Panc1 (cell line): ENCODE measurements at regions of chr19 and their contacts with region 1.

Region 1: GRCh38 chr19:40200341-40201099 is 9.3 kb downstream of the MAP3K10 start:
- DNase-seq: no peak
- ATAC-seq: peak; percentile 7; the same call in 1 of the 2 replicates
- H3K4me3 ChIP-seq: no peak overlapping the region
- H3K27ac ChIP-seq: no peak overlapping the region
- H3K4me1 ChIP-seq: no peaks in the 10 kb centered on the region
- H3K27me3 ChIP-seq: no peaks in the 10 kb centered on the region
- CTCF ChIP-seq: no peak

Region 2: DNA sequence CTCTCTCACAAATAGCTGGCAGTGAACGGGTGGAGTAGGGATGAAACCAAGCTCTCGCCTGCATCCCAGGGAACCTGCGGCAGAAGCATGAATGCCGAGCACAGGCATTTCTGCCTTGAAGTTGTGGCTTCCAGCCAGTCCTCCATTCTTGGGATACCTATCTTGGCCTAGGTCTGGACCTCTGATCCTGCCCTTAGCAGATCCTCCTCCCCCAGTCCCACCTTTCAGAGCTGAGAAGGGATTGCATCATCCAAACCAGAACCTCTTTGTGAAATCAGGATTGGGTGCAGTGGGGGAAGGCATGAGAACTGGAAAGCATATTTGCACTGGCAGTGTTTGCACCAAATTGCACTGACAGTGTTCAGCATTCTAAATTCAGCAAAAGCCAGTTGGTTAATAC is 115.6 kb before region 1 on chr19:
- CTCF ChIA-PET with region 1: no interaction called
- POLR2A ChIA-PET with region 1: no interaction called
- in situ Hi-C with region 1: no loop called
- intact Hi-C with region 1: no loop called
- DNase-seq: no peak
- ATAC-seq: peak; percentile 47
- H3K4me3 ChIP-seq: peak overlapping the region in 1 of 2 experiments; percentile 0; a peak in 2 of 4 replicates
- H3K27ac ChIP-seq: peak overlapping the region; percentile 40
- H3K4me1 ChIP-seq: peaks cover 20% of the 10 kb centered on the region
- H3K27me3 ChIP-seq: no peaks in the 10 kb centered on the region
- CTCF ChIP-seq: no peak

Region 3: DNA sequence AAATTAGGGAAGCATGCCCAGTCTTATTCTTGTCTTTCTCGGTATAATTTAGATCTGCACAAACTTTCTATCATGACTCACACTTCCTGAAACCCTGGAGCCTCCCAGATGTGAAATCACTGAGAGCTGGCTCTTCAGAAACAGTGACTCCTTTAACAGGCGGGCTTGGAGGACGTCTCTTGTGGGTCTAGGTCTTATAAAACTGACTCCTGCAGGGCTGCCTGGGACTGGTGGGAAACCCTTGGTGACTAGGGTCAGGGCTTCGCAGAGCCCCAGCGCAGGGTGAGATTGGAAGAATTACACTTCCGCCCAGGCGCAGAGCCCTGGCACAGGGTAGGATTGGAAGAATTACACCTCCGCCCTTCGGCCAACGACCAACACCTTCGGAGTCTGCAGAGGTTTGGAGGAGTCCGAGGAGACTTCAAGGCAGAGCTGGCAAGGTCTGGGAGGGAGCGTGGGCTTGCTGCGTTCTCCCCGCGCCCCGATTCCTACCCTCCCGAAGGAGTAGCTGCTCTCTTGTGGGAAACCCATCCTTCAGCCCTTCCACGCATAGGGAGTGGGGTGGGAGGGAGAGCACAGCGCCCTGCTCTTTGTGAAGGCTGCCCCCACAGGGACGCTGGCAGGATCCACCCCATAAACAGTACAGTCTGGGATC is 52.7 kb before region 1 on chr19:
- CTCF ChIA-PET with region 1: interaction called, 15 read pairs
- POLR2A ChIA-PET with region 1: no interaction called
- in situ Hi-C with region 1: no loop called
- intact Hi-C with region 1: no loop called
- DNase-seq: peak; percentile 100
- ATAC-seq: peak; percentile 87
- H3K4me3 ChIP-seq: peak overlapping the region; percentile 24 to 50
- H3K27ac ChIP-seq: peak overlapping the region; percentile 42
- H3K4me1 ChIP-seq: peaks cover 14% of the 10 kb centered on the region
- H3K27me3 ChIP-seq: no peaks in the 10 kb centered on the region
- CTCF ChIP-seq: no peak

Region 4: DNA sequence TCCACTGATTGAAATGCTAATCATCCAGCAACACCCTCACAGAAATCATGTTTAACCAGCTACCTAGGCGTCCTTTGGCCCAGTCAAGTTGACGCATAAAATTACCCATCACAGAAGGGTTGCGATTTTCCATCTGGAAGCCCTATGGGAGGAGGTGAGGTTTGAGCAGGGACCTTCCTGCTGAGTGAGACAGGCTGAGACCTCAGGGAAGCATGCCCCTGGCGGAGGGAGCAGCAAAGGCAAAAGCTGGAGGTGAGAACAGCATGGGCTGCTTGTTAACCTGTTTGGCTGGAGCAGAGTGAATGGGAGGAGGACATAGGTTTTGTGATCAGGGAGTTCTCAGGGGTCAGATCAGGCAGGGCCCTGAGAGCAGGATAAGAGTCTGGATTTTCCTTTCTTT is 10.4 kb after region 1 on chr19:
- CTCF ChIA-PET with region 1: interaction called, 23 read pairs
- POLR2A ChIA-PET with region 1: interaction called, 22 read pairs
- in situ Hi-C with region 1: no loop called
- intact Hi-C with region 1: no loop called
- DNase-seq: no peak
- ATAC-seq: 0 out of 2 replicates have a peak, but pooled peaks have one; percentile 2
- H3K4me3 ChIP-seq: no peak overlapping the region
- H3K27ac ChIP-seq: no peak overlapping the region
- H3K4me1 ChIP-seq: no peaks in the 10 kb centered on the region
- H3K27me3 ChIP-seq: no peaks in the 10 kb centered on the region
- CTCF ChIP-seq: no peak